Activated CD4-positive, alpha-beta memory T cell treated with anti-CD3 and anti-CD28 coated beads for 36 hours (primary cell): ENCODE measurements at regions of chr3 and their contacts with region 1.

Region 1: GRCh38 chr3:15557511-15557946 is 36.0 kb upstream of the COLQ start:
- DNase-seq: peak; percentile 75
- H3K4me3 Mint-ChIP-seq: no peak overlapping the region
- H3K27ac Mint-ChIP-seq: no peak overlapping the region
- H3K4me1 Mint-ChIP-seq: peaks cover 21% of the 10 kb centered on the region
- H3K27me3 Mint-ChIP-seq: no peaks in the 10 kb centered on the region

Region 2: GRCh38 chr3:15535732-15536131 is 21.8 kb before region 1 on chr3:
- CTCF ChIA-PET with region 1: interaction called, 4 read pairs
- POLR2A ChIA-PET with region 1: no interaction called
- intact Hi-C with region 1: loop called (anchors 2 kb)
- DNase-seq: peak; percentile 73
- H3K4me3 Mint-ChIP-seq: no peak overlapping the region
- H3K27ac Mint-ChIP-seq: peak overlapping the region; percentile 61
- H3K4me1 Mint-ChIP-seq: peaks cover 44% of the 10 kb centered on the region
- H3K27me3 Mint-ChIP-seq: no peaks in the 10 kb centered on the region

Region 3: DNA sequence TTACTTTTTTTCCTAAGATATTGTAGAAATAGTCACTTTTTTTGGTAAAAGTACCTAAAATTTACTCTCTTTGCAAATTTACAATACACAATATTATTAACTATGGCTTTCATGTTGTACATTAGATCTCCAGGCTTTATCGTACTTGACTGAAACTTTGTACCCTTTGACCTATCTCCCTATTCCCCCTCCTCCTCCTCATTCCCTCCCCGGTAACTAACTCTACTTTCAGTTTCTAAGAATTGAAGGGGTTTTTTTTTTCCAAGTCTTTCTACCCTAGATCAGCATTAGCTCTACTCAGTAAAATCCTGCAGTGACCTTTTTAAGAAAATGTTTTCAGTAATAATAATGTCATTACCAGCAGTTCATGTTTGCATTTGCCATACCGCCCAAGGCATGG is 33.7 kb after region 1 on chr3:
- CTCF ChIA-PET with region 1: no interaction called
- POLR2A ChIA-PET with region 1: no interaction called
- intact Hi-C with region 1: no loop called
- DNase-seq: no peak
- H3K4me3 Mint-ChIP-seq: no peak overlapping the region
- H3K27ac Mint-ChIP-seq: no peak overlapping the region
- H3K4me1 Mint-ChIP-seq: no peaks in the 10 kb centered on the region
- H3K27me3 Mint-ChIP-seq: no peaks in the 10 kb centered on the region

Region 4: GRCh38 chr3:15616053-15616452 is 58.5 kb after region 1 on chr3:
- CTCF ChIA-PET with region 1: no interaction called
- POLR2A ChIA-PET with region 1: no interaction called
- intact Hi-C with region 1: no loop called
- DNase-seq: no peak
- H3K4me3 Mint-ChIP-seq: no peak overlapping the region
- H3K27ac Mint-ChIP-seq: no peak overlapping the region
- H3K4me1 Mint-ChIP-seq: peaks cover 4% of the 10 kb centered on the region
- H3K27me3 Mint-ChIP-seq: no peaks in the 10 kb centered on the region

Region 5: DNA sequence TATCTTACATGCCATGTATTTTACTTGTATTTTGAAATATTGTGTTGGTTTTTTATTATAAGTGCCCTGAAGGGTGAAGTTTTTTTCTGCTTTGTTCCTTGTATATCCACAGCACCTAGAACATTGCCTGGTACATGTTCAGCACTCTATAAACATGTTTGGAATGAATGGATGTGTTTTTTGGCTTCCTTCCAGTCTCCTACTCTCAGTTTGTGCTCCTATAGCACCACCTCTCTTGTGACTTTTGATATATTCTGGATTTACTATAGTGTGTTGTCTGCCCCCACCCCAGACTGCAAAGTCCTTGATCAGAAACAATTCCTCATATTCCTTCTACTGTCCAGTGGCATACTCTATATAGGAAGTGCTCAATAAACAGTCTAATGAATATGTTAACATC is 1387.8 kb after region 1 on chr3:
- CTCF ChIA-PET with region 1: no interaction called
- POLR2A ChIA-PET with region 1: no interaction called
- intact Hi-C with region 1: no loop called
- DNase-seq: no peak
- H3K4me3 Mint-ChIP-seq: no peak overlapping the region
- H3K27ac Mint-ChIP-seq: no peak overlapping the region
- H3K4me1 Mint-ChIP-seq: peaks cover 64% of the 10 kb centered on the region
- H3K27me3 Mint-ChIP-seq: no peaks in the 10 kb centered on the region